Common myeloid progenitor, CD34-positive (primary cell): ENCODE measurements at regions of chr20 and their contacts with region 1.

Region 1: GRCh38 chr20:57622579-57623377 is 2.6 kb upstream of the ZBP1 start:
- DNase-seq: peak; percentile 49 to 57 (median 55)
- H3K4me3 ChIP-seq: no peak overlapping the region
- H3K27ac ChIP-seq: no peak overlapping the region
- H3K4me1 ChIP-seq: peaks cover 11 to 57% (median 49%) of the 10 kb centered on the region in 4 experiments
- H3K27me3 ChIP-seq: no peaks in the 10 kb centered on the region

Region 2: GRCh38 chr20:57374931-57375651 is 247.7 kb before region 1 on chr20:
- CTCF ChIA-PET with region 1: no interaction called
- POLR2A ChIA-PET with region 1: no interaction called
- DNase-seq: no peak
- H3K4me3 ChIP-seq: peak overlapping the region in 1 of 7 experiments; percentile 3
- H3K27ac ChIP-seq: peak overlapping the region in 1 of 2 experiments; percentile 8
- H3K4me1 ChIP-seq: peaks cover 0 to 11% (median 0%) of the 10 kb centered on the region in 4 experiments
- H3K27me3 ChIP-seq: no peaks in the 10 kb centered on the region

Region 3: GRCh38 chr20:57647006-57647932 is 24.5 kb after region 1 on chr20:
- CTCF ChIA-PET with region 1: interaction called, 35 read pairs
- POLR2A ChIA-PET with region 1: no interaction called
- DNase-seq: no peak
- H3K4me3 ChIP-seq: no peak overlapping the region
- H3K27ac ChIP-seq: no peak overlapping the region
- H3K4me1 ChIP-seq: no peaks in the 10 kb centered on the region
- H3K27me3 ChIP-seq: peaks cover 0 to 8% (median 0%) of the 10 kb centered on the region in 5 experiments

Region 4: GRCh38 chr20:57654363-57654997 is 31.7 kb after region 1 on chr20:
- CTCF ChIA-PET with region 1: interaction called, 35 read pairs
- POLR2A ChIA-PET with region 1: no interaction called
- DNase-seq: peak; percentile 60 to 74 (median 69)
- H3K4me3 ChIP-seq: no peak overlapping the region
- H3K27ac ChIP-seq: no peak overlapping the region
- H3K4me1 ChIP-seq: no peaks in the 10 kb centered on the region
- H3K27me3 ChIP-seq: peaks cover 0 to 4% (median 0%) of the 10 kb centered on the region in 5 experiments